WTC11 (cell line): ENCODE measurements at regions of chr19 and their contacts with region 1.

Region 1: DNA sequence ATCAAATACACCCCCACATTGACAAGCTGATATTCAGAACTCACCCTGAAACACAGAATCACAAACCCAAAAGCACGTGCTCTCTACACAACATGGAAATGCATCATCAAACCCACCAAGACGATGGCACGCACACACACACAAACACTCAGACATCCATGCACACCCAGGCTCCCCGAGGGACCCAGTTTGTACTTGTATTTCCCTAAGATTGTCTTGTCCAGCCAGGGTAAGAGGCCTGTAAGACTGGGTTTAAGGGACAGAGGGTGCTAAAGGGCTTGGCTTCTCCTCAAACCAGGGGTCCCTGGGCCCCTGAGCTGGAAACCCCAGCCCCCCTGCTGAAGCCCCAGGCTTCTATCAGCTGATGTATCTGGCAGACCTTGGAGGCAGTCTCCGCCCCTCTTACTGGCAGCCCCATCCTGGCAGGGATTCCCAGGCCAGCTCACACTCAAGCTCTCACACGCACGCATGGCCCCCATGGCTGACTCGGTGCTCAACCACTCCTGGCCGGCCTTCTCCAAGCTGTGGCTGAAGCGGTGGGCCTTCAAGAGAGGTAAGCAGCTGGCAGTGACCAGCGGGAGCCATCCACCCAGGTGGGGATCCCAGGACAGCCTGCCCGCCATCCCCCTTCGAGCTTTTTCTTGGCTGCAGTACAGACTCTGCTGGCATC is 6.5 kb downstream of the ARHGEF18 start:
- DNase-seq: no peak
- ATAC-seq: no peak
- H3K4me3 Mint-ChIP-seq: no peak overlapping the region
- H3K27ac Mint-ChIP-seq: no peak overlapping the region
- H3K4me1 Mint-ChIP-seq: no peaks in the 10 kb centered on the region
- H3K27me3 Mint-ChIP-seq: peaks cover 21% of the 10 kb centered on the region
- CTCF ChIP-seq: no peak

Region 2: DNA sequence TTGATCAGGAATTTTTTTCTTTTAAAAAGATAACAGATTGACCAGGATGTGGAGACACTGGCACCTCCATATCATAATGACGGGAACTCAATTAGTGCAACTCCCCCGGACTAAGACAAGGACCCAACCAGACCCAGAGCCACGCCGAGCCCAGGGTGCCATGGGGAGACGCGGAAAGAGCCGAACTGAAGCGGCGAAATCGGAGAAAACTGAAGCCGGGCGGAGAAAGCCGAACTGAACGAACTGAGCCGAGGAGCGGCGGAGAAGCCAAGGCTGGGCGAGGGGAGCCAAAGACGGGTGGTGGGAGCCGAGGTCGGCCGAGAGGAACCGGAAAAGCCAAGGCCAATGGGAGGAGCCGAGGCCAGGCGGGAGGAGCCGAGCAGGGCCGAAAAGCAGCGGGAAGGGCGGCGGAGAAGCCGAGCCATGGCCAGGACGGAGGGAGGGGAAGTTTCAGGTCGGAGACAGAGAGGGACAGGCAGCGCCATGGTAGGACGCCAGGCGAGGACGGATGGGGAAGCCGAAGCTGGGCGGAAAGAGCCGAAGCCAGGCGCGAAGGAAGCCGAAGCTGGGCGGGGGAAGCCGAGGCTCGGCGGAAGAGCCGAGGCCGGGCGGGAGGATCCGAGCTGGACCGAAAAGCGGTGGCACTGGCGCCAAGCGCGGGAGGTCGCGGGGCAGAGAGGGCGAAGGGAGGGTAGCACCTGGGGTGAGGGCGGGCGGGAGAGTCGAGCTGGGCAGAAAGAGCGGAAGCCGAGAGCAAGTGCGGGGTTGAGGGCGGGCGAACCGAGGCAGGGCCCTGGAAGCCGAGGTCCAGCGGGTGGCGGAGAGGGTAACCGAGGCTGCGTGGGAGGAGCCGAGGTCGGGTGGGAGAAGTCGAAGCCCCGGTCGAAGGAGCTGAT is 256.3 kb before region 1 on chr19:
- CTCF ChIA-PET with region 1: interaction called, 34 read pairs
- POLR2A ChIA-PET with region 1: interaction called, 4 read pairs
- DNase-seq: peak; percentile 95
- ATAC-seq: peak; percentile 88
- H3K4me3 Mint-ChIP-seq: peak overlapping the region; percentile 75
- H3K27ac Mint-ChIP-seq: peak overlapping the region; percentile 78
- H3K4me1 Mint-ChIP-seq: peaks cover 13% of the 10 kb centered on the region
- H3K27me3 Mint-ChIP-seq: peaks cover 7% of the 10 kb centered on the region
- CTCF ChIP-seq: no peak

Region 3: DNA sequence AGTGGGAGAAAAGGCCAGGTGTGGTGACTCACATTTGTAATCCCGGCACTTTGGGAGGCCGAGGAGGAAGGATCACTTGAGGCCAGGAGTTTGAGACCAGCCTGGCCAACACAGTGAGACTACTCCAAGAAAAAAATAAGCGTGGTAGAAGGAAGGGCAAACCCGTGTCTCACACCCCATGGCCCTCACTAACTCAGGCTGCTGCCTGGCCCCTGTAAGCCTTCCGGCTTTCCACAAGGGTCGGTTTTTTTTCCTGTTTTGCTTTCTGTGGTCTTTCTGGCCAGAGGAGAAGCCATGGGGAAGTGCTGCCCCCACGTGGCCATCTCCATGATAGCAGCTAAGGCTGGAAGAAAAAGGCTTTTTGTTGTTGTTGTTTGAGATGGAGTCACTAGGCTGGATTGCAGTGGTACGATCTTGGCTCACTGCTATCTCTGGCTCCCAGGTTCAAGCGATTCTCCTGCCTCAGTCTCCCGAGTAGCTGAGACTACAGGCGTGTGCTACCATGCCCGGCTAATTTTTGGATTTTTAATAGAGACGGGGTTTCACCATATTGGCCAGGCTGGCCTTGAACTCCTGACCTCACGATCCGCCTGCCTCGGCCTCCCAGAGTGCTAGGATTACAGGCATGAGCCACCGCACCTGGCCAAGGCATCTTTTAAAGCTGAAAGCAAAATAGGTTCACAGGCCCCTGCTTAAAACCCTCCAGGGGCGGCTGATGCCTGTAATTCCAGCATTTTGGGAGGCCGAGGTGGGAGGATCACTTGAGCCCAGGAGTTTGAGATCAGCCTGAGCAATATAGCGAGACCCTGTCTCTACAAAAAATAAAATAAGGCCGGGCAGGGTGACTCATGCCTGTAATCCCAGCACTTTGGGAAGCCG is 14.1 kb before region 1 on chr19:
- CTCF ChIA-PET with region 1: interaction called, 11 read pairs
- POLR2A ChIA-PET with region 1: no interaction called
- DNase-seq: peak; percentile 94
- ATAC-seq: peak; percentile 91
- H3K4me3 Mint-ChIP-seq: no peak overlapping the region
- H3K27ac Mint-ChIP-seq: peak overlapping the region; percentile 90
- H3K4me1 Mint-ChIP-seq: peaks cover 6% of the 10 kb centered on the region; the same call in 1 of the 2 replicates
- H3K27me3 Mint-ChIP-seq: no peaks in the 10 kb centered on the region
- CTCF ChIP-seq: peak; percentile 95

Region 4: GRCh38 chr19:7366701-7367420 is 11.6 kb after region 1 on chr19:
- CTCF ChIA-PET with region 1: interaction called, 23 read pairs
- POLR2A ChIA-PET with region 1: no interaction called
- DNase-seq: no peak
- ATAC-seq: peak; percentile 46; the same call in 1 of the 2 replicates
- H3K4me3 Mint-ChIP-seq: no peak overlapping the region
- H3K27ac Mint-ChIP-seq: no peak overlapping the region
- H3K4me1 Mint-ChIP-seq: no peaks in the 10 kb centered on the region
- H3K27me3 Mint-ChIP-seq: peaks cover 38% of the 10 kb centered on the region
- CTCF ChIP-seq: peak; percentile 40; the same call in 1 of the 2 replicates

Region 5: DNA sequence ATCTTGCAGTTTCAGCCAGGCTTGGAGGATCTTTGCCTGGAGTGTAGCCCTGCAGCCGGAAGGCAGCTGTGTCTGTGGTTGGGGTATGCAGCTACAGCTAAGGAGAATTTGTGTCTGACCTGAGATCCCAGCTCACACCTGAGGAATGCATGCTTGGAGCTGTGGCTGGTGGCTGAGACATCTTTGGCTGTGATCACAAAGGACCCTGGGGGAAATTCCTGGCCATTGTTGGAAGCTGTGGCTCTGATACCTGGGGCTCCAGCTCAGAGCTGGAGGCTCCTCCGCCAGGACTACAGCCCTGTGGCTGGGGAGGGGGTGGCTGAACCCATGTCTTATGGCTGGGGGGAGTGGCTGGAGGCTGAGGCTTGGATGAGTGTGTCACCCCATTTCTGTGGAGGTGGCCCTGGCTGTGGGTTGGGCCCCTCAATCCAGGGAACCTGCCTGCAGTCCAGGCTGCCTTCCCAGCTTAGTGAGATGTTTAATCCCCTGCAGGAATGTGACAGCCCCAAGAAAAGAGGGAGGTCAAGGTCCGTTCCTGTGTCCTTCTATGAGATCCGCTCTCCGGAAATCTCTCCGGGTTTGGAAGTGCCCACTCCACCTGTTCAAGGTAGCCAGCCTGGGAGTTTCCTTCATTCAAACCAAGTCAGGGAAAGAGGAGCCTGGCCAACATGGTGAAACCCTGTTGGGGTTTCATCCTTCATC is 21.0 kb after region 1 on chr19:
- CTCF ChIA-PET with region 1: interaction called, 51 read pairs
- POLR2A ChIA-PET with region 1: no interaction called
- DNase-seq: no peak
- ATAC-seq: peak; percentile 27; the same call in 1 of the 2 replicates
- H3K4me3 Mint-ChIP-seq: no peak overlapping the region
- H3K27ac Mint-ChIP-seq: peak overlapping the region; percentile 32; the same call in 1 of the 2 replicates
- H3K4me1 Mint-ChIP-seq: peaks cover 8% of the 10 kb centered on the region
- H3K27me3 Mint-ChIP-seq: peaks cover 2% of the 10 kb centered on the region; the same call in 1 of the 2 replicates
- CTCF ChIP-seq: no peak

Region 6: DNA sequence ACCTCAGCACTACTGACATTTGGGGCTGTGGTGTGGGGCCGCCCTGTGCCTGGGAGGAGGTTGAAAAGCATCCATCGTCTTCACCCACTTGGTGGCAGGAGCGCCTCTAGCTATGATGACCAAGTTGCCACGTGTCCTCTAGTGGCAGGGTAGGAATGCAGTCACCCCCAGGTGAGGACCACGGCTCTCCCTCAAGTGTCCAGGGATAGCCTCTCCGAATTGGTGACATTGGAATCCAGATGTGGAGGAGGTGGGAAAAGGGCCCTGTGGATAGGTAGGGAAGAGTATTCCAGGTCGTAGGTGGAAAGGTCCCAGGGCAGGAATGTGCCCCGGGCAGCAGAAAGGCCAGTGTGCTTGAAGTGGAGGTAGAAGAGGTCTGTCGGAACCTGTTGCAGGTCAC is 31.0 kb after region 1 on chr19:
- CTCF ChIA-PET with region 1: interaction called, 51 read pairs
- POLR2A ChIA-PET with region 1: no interaction called
- DNase-seq: peak; percentile 35
- ATAC-seq: peak; percentile 61
- H3K4me3 Mint-ChIP-seq: no peak overlapping the region
- H3K27ac Mint-ChIP-seq: no peak overlapping the region
- H3K4me1 Mint-ChIP-seq: peaks cover 9% of the 10 kb centered on the region
- H3K27me3 Mint-ChIP-seq: peaks cover 2% of the 10 kb centered on the region
- CTCF ChIP-seq: no peak

Region 7: GRCh38 chr19:7421896-7422744 is 66.8 kb after region 1 on chr19:
- CTCF ChIA-PET with region 1: no interaction called
- POLR2A ChIA-PET with region 1: no interaction called
- DNase-seq: no peak
- ATAC-seq: no peak
- H3K4me3 Mint-ChIP-seq: no peak overlapping the region
- H3K27ac Mint-ChIP-seq: peak overlapping the region; percentile 39; the same call in 1 of the 2 replicates
- H3K4me1 Mint-ChIP-seq: peaks cover 7% of the 10 kb centered on the region
- H3K27me3 Mint-ChIP-seq: no peaks in the 10 kb centered on the region; the same call in 1 of the 2 replicates
- CTCF ChIP-seq: no peak

Region 8: GRCh38 chr19:7469669-7470285 is 114.5 kb after region 1 on chr19:
- CTCF ChIA-PET with region 1: no interaction called
- POLR2A ChIA-PET with region 1: no interaction called
- DNase-seq: no peak
- ATAC-seq: no peak
- H3K4me3 Mint-ChIP-seq: no peak overlapping the region
- H3K27ac Mint-ChIP-seq: no peak overlapping the region
- H3K4me1 Mint-ChIP-seq: no peaks in the 10 kb centered on the region
- H3K27me3 Mint-ChIP-seq: no peaks in the 10 kb centered on the region
- CTCF ChIP-seq: no peak

Region 9: DNA sequence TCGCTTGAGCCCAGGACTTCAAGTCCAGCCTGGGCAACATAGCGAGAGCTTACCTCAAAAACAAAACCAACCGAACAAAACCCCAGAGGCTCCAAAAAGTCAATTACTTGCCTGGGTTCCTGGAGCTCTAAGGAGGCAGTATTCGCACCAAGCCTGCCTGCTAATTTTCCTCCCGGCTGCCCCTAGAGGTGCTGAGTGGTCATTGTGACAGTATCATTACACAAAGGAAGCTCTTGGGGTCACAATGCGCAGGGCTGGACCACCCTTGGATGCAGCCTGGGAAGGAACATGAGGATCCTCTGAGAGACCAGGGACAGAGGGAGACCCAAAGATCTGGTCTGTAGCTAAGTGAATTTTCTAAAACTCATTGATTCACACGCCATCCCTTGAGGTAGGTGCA is 142.0 kb after region 1 on chr19:
- CTCF ChIA-PET with region 1: interaction called, 18 read pairs
- POLR2A ChIA-PET with region 1: no interaction called
- DNase-seq: peak; percentile 53
- ATAC-seq: peak; percentile 78
- H3K4me3 Mint-ChIP-seq: no peak overlapping the region
- H3K27ac Mint-ChIP-seq: no peak overlapping the region
- H3K4me1 Mint-ChIP-seq: no peaks in the 10 kb centered on the region
- H3K27me3 Mint-ChIP-seq: peaks cover 69% of the 10 kb centered on the region
- CTCF ChIP-seq: 0 out of 2 replicates have a peak, but pooled peaks have one; percentile 15